ENCODE measurements at regions of chr3 and their contacts with region 1.

Region 1: DNA sequence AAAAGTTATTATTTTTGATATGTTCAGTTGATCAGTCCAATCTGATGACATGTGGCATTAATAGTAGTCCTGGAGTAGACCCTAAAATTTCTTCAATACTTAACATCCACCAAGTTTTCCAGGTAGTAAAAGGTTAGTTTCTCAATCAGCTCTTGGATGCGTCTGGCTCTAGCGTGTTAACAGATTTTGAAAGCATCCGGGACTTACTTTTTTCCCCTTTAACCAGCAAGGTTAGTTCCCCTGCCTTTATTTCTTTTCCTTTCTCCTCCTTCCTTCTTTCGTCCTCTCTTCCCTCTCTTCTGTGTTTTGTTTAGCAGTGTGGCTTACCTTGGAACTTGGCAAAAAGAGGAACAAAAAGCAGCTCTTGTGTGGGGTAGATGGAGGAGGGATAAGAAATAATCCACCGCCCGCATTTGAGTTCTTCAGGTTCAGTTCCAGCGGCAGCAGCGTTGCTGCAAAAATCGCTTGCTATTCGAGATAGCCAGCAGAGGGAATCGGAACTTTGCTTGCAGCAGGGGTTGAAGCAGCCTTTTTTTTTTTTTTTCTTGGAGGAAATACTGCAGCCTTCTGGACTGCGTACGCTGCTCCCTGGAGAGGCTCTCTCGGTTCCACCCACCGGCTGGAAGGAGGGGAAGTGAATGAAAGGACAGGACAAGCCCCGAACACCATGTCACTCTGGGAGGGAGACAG is at the start of gene RBMS3:
- DNase-seq: peak; percentile 97
- H3K4me3 ChIP-seq: peak within 1 kb of the TSS; percentile 37 to 63 (median 58)
- H3K27ac ChIP-seq: peak within 1 kb of the TSS; percentile 85 to 88 (median 87)
- H3K4me1 ChIP-seq: peaks cover 0 to 42% (median 25%) of the 10 kb centered on the region in 4 donors
- H3K27me3 ChIP-seq: no peaks in the 10 kb centered on the region
- CTCF ChIP-seq: peak in 3 of 4 experiments; percentile 37 to 64 (median 52)
- EP300 ChIP-seq: peak in 1 of 4 donors; percentile 14
- POLR2A ChIP-seq: peak in 1 of 2 donors; percentile 60
- total RNA-seq, gene RBMS3: 39.9 to 61.9 (median 59.8) TPM

Region 2: GRCh38 chr3:29164825-29165224 is 115.7 kb before region 1 on chr3:
- intact Hi-C with region 1: no loop called
- DNase-seq: no peak
- H3K4me3 ChIP-seq: no peak overlapping the region
- H3K27ac ChIP-seq: no peak overlapping the region
- H3K4me1 ChIP-seq: no peaks in the 10 kb centered on the region
- H3K27me3 ChIP-seq: no peaks in the 10 kb centered on the region
- CTCF ChIP-seq: no peak
- EP300 ChIP-seq: no peak
- POLR2A ChIP-seq: no peak

Region 3: DNA sequence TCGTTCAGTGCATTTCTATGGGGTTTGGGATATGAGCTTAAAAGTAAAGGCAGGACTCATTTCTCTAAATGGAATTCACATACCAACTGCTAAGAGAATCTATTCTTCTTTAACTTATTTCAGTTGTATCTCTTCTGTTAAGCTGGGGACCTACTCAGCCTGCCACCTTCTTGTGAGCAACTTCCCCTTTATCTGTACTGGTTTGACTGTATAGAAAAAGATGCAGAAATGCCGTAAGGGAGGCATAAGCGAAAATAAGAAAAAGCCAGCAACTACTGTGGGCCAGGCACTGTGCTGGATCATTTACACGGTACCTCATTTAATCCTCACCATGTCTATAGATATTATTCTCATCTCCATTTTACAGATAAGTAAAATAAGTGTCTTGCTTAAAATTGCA is 38.7 kb after region 1 on chr3:
- intact Hi-C with region 1: loop called (anchors 5 kb)
- DNase-seq: no peak
- H3K4me3 ChIP-seq: no peak overlapping the region
- H3K27ac ChIP-seq: peak overlapping the region in 3 of 4 donors; percentile 65 to 75 (median 72)
- H3K4me1 ChIP-seq: peaks cover 0 to 89% (median 52%) of the 10 kb centered on the region in 4 donors
- H3K27me3 ChIP-seq: no peaks in the 10 kb centered on the region
- CTCF ChIP-seq: no peak
- EP300 ChIP-seq: no peak
- POLR2A ChIP-seq: no peak

Region 4: DNA sequence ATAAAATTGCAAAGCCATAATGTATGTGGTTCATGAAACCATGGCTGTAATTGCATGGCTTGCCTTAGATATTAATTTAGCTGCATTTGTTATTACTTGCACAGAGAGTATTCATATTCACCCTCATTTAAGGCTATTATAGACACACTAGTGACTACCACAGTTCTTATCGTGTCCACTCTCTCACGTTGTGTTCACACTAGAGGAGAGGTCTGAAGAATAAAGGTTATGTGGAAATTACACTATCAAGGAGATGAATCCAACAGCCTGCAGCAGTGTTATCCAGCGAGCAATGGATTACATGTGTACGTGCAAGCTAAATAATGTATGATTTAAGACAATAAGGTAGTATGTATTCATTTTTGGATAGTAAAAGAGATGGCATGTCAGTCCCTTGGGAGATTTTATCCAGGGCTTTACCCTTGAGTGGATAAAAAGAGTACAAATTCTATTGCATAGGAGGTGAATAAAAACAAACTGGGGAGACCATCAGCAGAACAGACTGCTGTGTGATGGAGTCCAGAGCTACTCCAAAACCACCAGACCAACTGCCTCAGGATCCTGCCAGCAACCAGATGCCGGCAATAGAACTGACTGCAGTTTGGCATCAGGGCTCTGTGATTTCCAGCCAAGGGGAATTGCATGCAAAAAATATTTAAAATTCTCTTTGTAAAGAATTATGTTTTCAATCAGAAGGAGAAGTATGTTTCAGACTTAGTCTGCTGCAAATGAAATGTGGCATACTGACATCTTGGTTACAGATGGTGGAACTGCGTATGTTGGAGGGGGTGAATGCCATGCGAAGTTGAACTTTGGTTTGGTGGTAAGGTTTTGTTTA is 146.9 kb after region 1 on chr3:
- intact Hi-C with region 1: loop called (anchors 5 kb)
- DNase-seq: peak; percentile 76
- H3K4me3 ChIP-seq: no peak overlapping the region
- H3K27ac ChIP-seq: peak overlapping the region in 3 of 4 donors; percentile 48 to 70 (median 60)
- H3K4me1 ChIP-seq: peaks cover 0 to 52% (median 43%) of the 10 kb centered on the region in 4 donors
- H3K27me3 ChIP-seq: no peaks in the 10 kb centered on the region
- CTCF ChIP-seq: no peak
- EP300 ChIP-seq: no peak
- POLR2A ChIP-seq: no peak

Region 5: GRCh38 chr3:29642393-29643033 is 362.0 kb after region 1 on chr3:
- intact Hi-C with region 1: loop called (anchors 5 kb)
- DNase-seq: no peak
- H3K4me3 ChIP-seq: no peak overlapping the region
- H3K27ac ChIP-seq: peak overlapping the region; percentile 34 to 82 (median 70)
- H3K4me1 ChIP-seq: peaks cover 0 to 46% (median 32%) of the 10 kb centered on the region in 4 donors
- H3K27me3 ChIP-seq: no peaks in the 10 kb centered on the region
- CTCF ChIP-seq: no peak
- EP300 ChIP-seq: no peak
- POLR2A ChIP-seq: no peak

Region 6: DNA sequence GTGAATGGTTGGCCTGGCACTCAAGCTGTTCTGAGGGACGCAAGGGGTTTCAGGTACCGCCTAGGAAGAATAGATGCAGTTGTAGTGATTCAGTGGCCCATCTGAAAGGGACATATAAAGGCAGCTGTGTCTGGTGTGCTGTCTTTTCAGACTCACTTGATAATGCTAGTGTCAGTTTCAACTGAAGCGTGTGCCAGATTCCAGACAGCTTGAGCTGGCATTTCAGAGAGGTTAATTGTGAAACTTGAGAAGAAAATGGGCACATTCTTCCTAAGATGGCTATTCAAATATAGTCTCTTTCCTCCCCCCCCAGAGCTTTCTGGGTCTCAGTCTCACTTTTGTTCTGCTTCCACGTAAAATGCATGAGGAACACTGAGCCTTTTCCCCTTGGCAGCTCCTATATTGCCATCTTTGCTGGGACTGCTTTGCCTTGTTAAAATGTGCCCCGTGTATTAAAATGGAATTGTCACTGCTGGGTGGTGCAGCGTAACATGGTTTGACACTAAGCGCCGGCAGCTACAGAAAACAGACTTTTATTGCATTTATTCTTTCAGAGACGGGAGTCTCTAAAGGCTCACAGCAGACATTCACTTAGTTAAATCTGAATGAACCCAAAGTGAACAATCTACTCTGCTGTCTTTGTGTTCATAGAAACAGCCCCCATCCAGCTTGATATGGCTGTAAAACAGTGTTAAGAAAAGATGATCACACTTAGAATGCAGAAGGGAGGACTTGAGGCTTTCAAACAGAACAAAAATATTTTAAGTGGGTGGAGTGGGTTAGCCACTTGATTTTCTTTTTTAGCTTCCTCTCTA is 479.1 kb after region 1 on chr3:
- intact Hi-C with region 1: loop called (anchors 2 kb)
- DNase-seq: no peak
- H3K4me3 ChIP-seq: peak overlapping the region in 3 of 4 donors; percentile 3 to 14 (median 6)
- H3K27ac ChIP-seq: peak overlapping the region; percentile 59 to 72 (median 70)
- H3K4me1 ChIP-seq: peaks cover 0 to 55% (median 37%) of the 10 kb centered on the region in 4 donors
- H3K27me3 ChIP-seq: no peaks in the 10 kb centered on the region
- CTCF ChIP-seq: no peak
- EP300 ChIP-seq: no peak
- POLR2A ChIP-seq: no peak

Measured in sigmoid colon (tissue), 7 donors.